CD14-positive monocyte (primary cell): ENCODE measurements at regions of chr21 and their contacts with region 1.

Region 1: DNA sequence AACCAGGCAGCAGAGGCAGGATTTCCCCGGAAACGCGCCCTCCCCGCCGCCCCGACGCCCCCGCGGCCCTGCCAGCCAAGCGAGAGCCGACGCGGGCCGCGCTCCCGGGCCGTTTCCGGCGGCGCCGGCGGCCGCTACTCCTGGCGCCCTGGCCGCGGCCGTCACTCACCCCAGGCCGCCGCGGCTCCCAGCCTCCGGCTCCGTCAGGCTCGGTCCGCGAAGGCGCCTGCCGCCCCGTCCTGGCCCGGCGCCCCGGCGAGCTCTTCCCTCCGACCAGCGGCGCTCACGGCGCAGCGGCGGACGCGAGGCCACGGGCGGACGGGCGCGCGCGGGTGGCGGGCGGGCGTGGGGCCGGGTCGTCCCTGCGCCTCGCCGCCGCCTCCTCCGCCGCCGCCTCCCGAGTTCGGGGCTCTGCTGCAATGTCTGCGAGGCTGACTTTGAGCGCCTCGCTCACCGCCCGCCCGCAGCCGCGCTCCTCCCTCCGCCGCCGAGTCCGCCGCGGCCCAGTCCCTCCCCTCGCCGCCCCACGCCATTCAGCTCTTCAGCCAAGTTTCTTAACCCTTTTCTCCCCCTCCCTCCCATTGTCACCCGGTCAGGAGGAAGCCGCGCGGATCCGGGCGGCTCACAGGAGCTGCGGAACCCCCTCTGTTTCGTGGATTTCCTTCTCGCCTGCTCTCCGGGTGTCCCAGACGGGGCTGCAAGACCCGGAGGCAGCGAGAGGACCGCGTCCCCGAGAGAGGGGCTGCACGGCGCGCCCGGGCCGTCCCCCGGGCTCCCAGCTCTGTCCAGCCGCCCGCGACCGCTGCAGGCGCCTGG is at the start of gene NRIP1:
- DNase-seq: peak; percentile 81 to 89 (median 86)
- H3K4me3 ChIP-seq: peak within 1 kb of the TSS; percentile 73 to 97 (median 91)
- H3K4me3 Mint-ChIP-seq: peak within 1 kb of the TSS; percentile 98
- H3K27ac ChIP-seq: peak within 1 kb of the TSS; percentile 90
- H3K27ac Mint-ChIP-seq: peak within 1 kb of the TSS; percentile 96 to 99 (median 97)
- H3K4me1 ChIP-seq: peaks cover 29 to 48% of the 10 kb centered on the region in 2 donors
- H3K4me1 Mint-ChIP-seq: peaks cover 43% of the 10 kb centered on the region
- H3K27me3 ChIP-seq: no peaks in the 10 kb centered on the region
- H3K27me3 Mint-ChIP-seq: no peaks in the 10 kb centered on the region
- CTCF ChIP-seq: no peak
- polyA plus RNA-seq, gene NRIP1: 4.3 to 28.2 (median 23.5) TPM

Region 2: GRCh38 chr21:14864211-14865021 is 200.4 kb before region 1 on chr21:
- intact Hi-C with region 1: loop called in 1 of 2 experiments (anchors 10 kb)
- DNase-seq: peak; percentile 55 to 93 (median 68)
- H3K4me3 ChIP-seq: no peak overlapping the region
- H3K4me3 Mint-ChIP-seq: no peak overlapping the region
- H3K27ac ChIP-seq: peak overlapping the region; percentile 10 to 54
- H3K27ac Mint-ChIP-seq: peak overlapping the region; percentile 58 to 94 (median 79)
- H3K4me1 ChIP-seq: peaks cover 56 to 69% of the 10 kb centered on the region in 2 donors
- H3K4me1 Mint-ChIP-seq: peaks cover 67% of the 10 kb centered on the region
- H3K27me3 ChIP-seq: no peaks in the 10 kb centered on the region
- H3K27me3 Mint-ChIP-seq: no peaks in the 10 kb centered on the region
- CTCF ChIP-seq: peak; percentile 67

Region 3: GRCh38 chr21:15134701-15135470 is 70.1 kb after region 1 on chr21:
- intact Hi-C with region 1: loop called in 1 of 2 experiments (anchors 5 kb)
- DNase-seq: peak; percentile 57 to 67 (median 60)
- H3K4me3 ChIP-seq: peak overlapping the region in 1 of 3 experiments; percentile 38
- H3K4me3 Mint-ChIP-seq: peak overlapping the region; percentile 25 to 72
- H3K27ac ChIP-seq: no peak overlapping the region
- H3K27ac Mint-ChIP-seq: peak overlapping the region in 1 of 7 donors; percentile 56
- H3K4me1 ChIP-seq: peaks cover 30 to 39% of the 10 kb centered on the region in 2 donors
- H3K4me1 Mint-ChIP-seq: peaks cover 38% of the 10 kb centered on the region
- H3K27me3 ChIP-seq: no peaks in the 10 kb centered on the region
- H3K27me3 Mint-ChIP-seq: peaks cover 0 to 7% (median 3%) of the 10 kb centered on the region in 3 donors
- CTCF ChIP-seq: no peak

Region 4: GRCh38 chr21:15172992-15173626 is 108.3 kb after region 1 on chr21:
- intact Hi-C with region 1: no loop called
- DNase-seq: no peak
- H3K4me3 ChIP-seq: no peak overlapping the region
- H3K4me3 Mint-ChIP-seq: no peak overlapping the region
- H3K27ac ChIP-seq: no peak overlapping the region
- H3K27ac Mint-ChIP-seq: no peak overlapping the region
- H3K4me1 ChIP-seq: no peaks in the 10 kb centered on the region
- H3K4me1 Mint-ChIP-seq: no peaks in the 10 kb centered on the region
- H3K27me3 ChIP-seq: no peaks in the 10 kb centered on the region
- H3K27me3 Mint-ChIP-seq: no peaks in the 10 kb centered on the region
- CTCF ChIP-seq: no peak

Region 5: GRCh38 chr21:15221799-15222386 is 157.1 kb after region 1 on chr21:
- intact Hi-C with region 1: loop called (anchors 5 kb)
- DNase-seq: peak; percentile 92 to 96 (median 95)
- H3K4me3 ChIP-seq: peak overlapping the region in 1 of 3 experiments; percentile 35
- H3K4me3 Mint-ChIP-seq: peak overlapping the region; percentile 20 to 51
- H3K27ac ChIP-seq: peak overlapping the region; percentile 23 to 88
- H3K27ac Mint-ChIP-seq: peak overlapping the region; percentile 87 to 97 (median 93)
- H3K4me1 ChIP-seq: peaks cover 49 to 61% of the 10 kb centered on the region in 2 donors
- H3K4me1 Mint-ChIP-seq: peaks cover 53% of the 10 kb centered on the region
- H3K27me3 ChIP-seq: no peaks in the 10 kb centered on the region
- H3K27me3 Mint-ChIP-seq: peaks cover 0 to 3% (median 0%) of the 10 kb centered on the region in 3 donors
- CTCF ChIP-seq: no peak

Region 6: DNA sequence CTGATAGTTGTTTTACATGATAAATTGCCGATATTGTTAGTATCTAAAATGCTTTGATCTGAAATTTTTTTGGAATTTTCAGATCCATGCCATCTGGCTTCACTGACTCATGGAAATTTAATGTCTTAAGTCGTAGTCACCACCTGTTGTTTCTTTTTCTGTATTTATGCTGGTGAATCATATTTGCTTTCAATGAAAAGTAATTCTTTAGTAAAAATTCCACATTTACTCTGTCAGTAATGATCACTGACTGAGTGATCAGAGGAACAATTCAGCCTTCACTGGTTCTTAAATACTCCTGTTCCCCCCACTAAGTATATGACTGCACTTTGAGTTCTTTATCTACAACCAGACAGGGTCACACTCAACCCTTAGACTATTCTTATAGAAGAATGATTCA is 185.6 kb after region 1 on chr21:
- intact Hi-C with region 1: no loop called
- DNase-seq: no peak
- H3K4me3 ChIP-seq: no peak overlapping the region
- H3K4me3 Mint-ChIP-seq: no peak overlapping the region
- H3K27ac ChIP-seq: no peak overlapping the region
- H3K27ac Mint-ChIP-seq: no peak overlapping the region
- H3K4me1 ChIP-seq: peaks cover 14 to 16% of the 10 kb centered on the region in 2 donors
- H3K4me1 Mint-ChIP-seq: peaks cover 21% of the 10 kb centered on the region
- H3K27me3 ChIP-seq: no peaks in the 10 kb centered on the region
- H3K27me3 Mint-ChIP-seq: peaks cover 0 to 4% (median 0%) of the 10 kb centered on the region in 3 donors
- CTCF ChIP-seq: no peak

Region 7: GRCh38 chr21:15483138-15483780 is 418.5 kb after region 1 on chr21:
- intact Hi-C with region 1: loop called in 1 of 2 experiments (anchors 10 kb)
- DNase-seq: peak; percentile 72 to 79 (median 76)
- H3K4me3 ChIP-seq: no peak overlapping the region
- H3K4me3 Mint-ChIP-seq: no peak overlapping the region
- H3K27ac ChIP-seq: no peak overlapping the region
- H3K27ac Mint-ChIP-seq: no peak overlapping the region
- H3K4me1 ChIP-seq: no peaks in the 10 kb centered on the region
- H3K4me1 Mint-ChIP-seq: peaks cover 2% of the 10 kb centered on the region
- H3K27me3 ChIP-seq: no peaks in the 10 kb centered on the region
- H3K27me3 Mint-ChIP-seq: no peaks in the 10 kb centered on the region
- CTCF ChIP-seq: peak; percentile 94